ENCODE measurements at regions of chr10 and their contacts with region 1.

Region 1: DNA sequence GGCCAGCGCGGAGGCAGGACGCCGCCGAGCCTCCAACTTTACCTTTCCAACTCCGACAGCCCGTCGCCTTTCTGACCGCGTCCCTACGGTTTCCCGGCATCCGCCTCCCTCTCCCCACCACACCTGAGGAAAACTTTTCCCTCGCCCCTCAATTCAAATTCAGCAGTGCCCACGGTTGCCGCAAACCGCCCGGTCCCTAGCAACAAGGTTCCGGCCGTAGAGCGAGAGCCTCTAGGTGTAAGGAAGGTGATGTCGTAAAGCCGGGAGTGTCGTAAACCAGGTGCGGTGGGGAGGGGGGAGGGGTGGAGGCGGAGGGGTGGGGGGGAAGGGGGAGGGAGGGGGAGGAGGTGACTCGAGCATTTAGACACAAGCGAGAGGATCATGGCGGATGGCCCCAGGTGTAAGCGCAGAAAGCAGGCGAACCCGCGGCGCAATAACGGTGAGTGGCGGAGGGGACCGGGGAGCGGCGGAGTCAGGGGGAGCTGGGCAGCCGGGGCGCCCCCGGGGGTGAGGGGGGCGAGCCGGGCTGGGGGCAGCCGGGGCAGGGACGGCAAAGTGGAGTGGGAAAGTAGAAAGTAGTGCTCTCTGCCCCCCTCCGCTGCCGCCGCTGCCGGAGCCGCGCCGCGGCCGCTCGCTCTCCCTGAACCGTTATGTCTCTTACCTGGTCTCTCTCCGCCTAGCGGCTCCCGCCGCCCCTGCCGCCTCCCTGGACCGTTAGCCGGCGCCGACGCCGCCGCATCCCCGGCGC is at the start of gene ZEB1:
- DNase-seq: peak; percentile 79
- H3K4me3 ChIP-seq: peak within 1 kb of the TSS; percentile 88 to 96 (median 94)
- H3K27ac ChIP-seq: peak within 1 kb of the TSS; percentile 96
- H3K4me1 ChIP-seq: peaks cover 64% of the 10 kb centered on the region
- H3K27me3 ChIP-seq: no peaks in the 10 kb centered on the region
- CTCF ChIP-seq: peak; percentile 19 to 55
- POLR2A ChIP-seq: no peak
- total RNA-seq, gene ZEB1: 117 and 130 TPM in 2 replicates

Region 2: GRCh38 chr10:30751678-30752331 is 567.2 kb before region 1 on chr10:
- CTCF ChIA-PET with region 1: interaction called, 13 read pairs
- POLR2A ChIA-PET with region 1: no interaction called
- dilution Hi-C with region 1: no loop called
- intact Hi-C with region 1: no loop called
- DNase-seq: peak; percentile 76
- H3K4me3 ChIP-seq: no peak overlapping the region
- H3K27ac ChIP-seq: no peak overlapping the region
- H3K4me1 ChIP-seq: peaks cover 5% of the 10 kb centered on the region
- H3K27me3 ChIP-seq: no peaks in the 10 kb centered on the region
- CTCF ChIP-seq: peak; percentile 90 to 98
- POLR2A ChIP-seq: no peak

Region 3: DNA sequence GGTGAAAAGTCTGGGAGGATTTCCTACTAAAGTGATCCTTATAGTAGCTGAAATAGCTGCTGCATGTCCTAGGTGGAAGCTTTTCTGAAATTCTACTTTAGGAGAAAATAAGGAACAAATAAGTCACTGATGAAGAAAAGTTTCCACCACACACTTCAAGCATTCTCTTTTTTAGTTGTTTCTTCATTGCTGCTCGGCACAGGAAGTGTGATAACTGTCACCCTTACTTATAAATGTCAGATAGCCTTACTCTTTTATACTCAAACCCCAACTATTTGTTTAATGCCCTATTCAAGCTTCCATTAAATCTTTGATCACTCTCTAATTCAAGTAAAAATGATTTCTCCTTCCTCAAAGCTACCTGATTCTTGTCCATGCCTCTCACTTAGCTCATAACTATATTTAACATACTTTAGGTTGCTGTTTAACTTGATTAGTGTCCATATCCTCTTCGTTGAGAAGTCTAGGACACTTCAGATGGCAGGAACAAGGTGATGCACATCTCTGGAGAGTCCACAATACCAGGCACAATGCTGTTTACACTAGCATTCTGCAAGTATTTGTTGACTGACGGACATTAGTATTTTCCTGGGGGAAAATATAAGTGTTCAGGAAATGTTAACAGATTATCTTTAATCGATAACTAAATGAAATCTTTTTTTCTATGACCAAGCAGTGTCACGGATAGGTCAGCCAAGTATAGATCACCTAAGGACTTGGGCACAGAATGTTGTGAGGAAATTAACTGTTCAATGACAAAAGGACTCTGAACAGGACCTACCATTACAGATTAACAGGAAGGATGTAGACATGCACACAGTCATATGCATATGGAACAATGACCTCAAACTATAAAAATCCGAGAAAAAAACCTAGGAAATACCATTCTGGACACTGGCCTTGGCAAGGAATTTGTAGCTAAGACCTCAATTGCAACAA is 354.8 kb before region 1 on chr10:
- CTCF ChIA-PET with region 1: no interaction called
- POLR2A ChIA-PET with region 1: no interaction called
- dilution Hi-C with region 1: no loop called
- intact Hi-C with region 1: loop called (anchors 5 kb)
- DNase-seq: peak; percentile 81
- H3K4me3 ChIP-seq: peak overlapping the region in 1 of 3 experiments; percentile 30
- H3K27ac ChIP-seq: peak overlapping the region; percentile 99
- H3K4me1 ChIP-seq: peaks cover 45% of the 10 kb centered on the region
- H3K27me3 ChIP-seq: no peaks in the 10 kb centered on the region
- CTCF ChIP-seq: no peak
- POLR2A ChIP-seq: peak; percentile 32

Region 4: DNA sequence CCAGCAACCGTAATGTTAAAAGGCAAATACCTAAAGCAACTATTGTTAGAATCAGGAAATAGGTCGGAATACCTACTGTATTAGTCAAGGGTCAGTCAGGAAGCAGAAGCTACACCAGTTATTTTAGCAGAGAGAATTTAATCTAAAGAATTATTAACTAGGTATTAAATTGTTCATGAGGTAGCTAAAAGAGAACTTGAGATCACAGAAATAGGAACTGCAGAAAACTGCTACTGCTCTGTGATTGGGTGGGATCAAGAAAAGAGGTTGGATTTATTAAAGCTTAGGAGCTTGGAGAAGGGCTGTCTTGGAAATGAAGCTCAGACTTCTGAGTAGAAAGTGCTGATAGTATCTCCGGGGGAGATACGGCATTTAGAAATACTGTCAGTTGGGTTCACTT is 267.3 kb before region 1 on chr10:
- CTCF ChIA-PET with region 1: no interaction called
- POLR2A ChIA-PET with region 1: no interaction called
- dilution Hi-C with region 1: no loop called
- intact Hi-C with region 1: loop called (anchors 5 kb)
- DNase-seq: peak; percentile 69
- H3K4me3 ChIP-seq: peak overlapping the region in 1 of 3 experiments; percentile 53
- H3K27ac ChIP-seq: peak overlapping the region; percentile 99
- H3K4me1 ChIP-seq: peaks cover 32% of the 10 kb centered on the region
- H3K27me3 ChIP-seq: no peaks in the 10 kb centered on the region
- CTCF ChIP-seq: no peak
- POLR2A ChIP-seq: no peak

Region 5: DNA sequence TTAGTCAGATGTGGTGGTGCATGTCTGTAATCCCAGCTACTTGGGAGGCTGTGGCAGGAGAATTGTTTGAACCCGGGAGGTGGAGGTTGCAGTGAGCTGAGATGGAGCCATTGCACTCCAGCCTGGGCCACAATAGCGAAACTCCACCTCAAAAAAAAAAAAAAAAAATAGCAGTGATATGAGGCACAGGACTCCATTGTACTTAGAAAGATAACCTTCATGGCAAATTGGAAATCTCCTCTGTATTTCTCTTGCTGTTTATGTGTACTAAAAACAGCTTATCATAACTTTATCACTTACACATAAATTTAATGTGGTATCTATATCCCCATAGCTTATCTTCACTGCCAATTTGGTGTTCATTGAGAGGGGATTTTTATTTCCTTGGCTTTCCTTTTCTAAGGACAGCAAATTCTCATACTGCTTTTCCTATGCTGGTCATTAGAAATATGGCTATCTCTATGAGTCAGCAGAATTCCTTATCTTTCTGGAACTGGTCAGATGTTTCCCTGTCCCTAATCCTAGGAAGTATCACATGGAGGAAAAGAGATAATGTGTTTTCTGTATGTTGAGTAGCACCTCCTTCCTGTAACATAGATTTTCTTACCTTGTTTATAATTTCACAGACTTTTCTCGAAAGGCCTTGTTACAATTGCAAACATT is 40.6 kb before region 1 on chr10:
- CTCF ChIA-PET with region 1: no interaction called
- POLR2A ChIA-PET with region 1: interaction called, 3 read pairs
- dilution Hi-C with region 1: no loop called
- intact Hi-C with region 1: loop called (anchors 2 kb)
- DNase-seq: peak; percentile 95
- H3K4me3 ChIP-seq: no peak overlapping the region
- H3K27ac ChIP-seq: peak overlapping the region; percentile 78
- H3K4me1 ChIP-seq: peaks cover 13% of the 10 kb centered on the region
- H3K27me3 ChIP-seq: no peaks in the 10 kb centered on the region
- CTCF ChIP-seq: no peak
- POLR2A ChIP-seq: no peak

Region 6: GRCh38 chr10:31340343-31340742 is 21.3 kb after region 1 on chr10:
- CTCF ChIA-PET with region 1: no interaction called
- POLR2A ChIA-PET with region 1: no interaction called
- dilution Hi-C with region 1: no loop called
- intact Hi-C with region 1: no loop called
- DNase-seq: no peak
- H3K4me3 ChIP-seq: no peak overlapping the region
- H3K27ac ChIP-seq: no peak overlapping the region
- H3K4me1 ChIP-seq: no peaks in the 10 kb centered on the region
- H3K27me3 ChIP-seq: no peaks in the 10 kb centered on the region
- CTCF ChIP-seq: no peak
- POLR2A ChIP-seq: no peak

Region 7: DNA sequence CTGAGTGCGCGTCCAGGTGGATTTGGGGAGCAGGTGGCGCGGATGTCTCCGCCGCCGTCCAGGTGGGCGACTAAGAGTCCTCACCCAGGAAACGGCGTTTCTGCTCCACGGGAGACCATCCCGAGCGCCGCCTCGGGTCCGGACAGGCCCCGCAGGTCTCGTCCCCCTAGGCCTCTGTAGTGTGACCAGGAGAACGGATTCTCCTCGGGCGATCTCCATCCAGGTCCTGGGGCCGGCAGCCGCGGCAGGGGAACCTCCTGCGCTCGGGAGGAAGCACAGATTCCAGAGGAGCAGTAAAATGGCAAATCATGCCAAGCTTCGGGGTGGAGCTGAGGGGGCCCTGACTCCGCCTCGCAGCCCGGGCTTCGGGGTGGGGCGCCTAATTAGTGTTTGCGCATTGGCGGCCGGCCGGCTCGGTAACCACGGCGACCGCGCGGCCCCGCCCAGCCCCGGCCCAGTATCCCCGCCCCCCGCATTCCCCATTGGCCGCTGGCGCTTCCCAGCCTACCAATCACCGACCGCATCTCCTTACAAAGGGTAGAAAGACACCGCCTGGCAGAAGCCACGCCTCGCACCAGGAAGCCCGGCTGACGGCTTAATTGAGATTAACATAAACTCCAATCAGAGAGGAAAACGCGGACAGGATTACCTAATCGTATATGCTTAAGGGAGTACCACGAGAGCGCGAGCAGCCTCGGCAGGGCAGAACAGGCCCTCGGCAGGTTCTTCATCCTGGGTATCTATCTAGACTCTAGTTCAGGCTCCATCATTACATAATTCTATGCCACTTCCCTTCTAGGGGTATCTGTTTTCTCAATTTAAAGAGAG is 441.0 kb after region 1 on chr10:
- CTCF ChIA-PET with region 1: no interaction called
- POLR2A ChIA-PET with region 1: no interaction called
- dilution Hi-C with region 1: no loop called
- intact Hi-C with region 1: loop called (anchors 10 kb)
- DNase-seq: peak; percentile 99
- H3K4me3 ChIP-seq: peak overlapping the region; percentile 57 to 77 (median 76)
- H3K27ac ChIP-seq: peak overlapping the region; percentile 94
- H3K4me1 ChIP-seq: peaks cover 11% of the 10 kb centered on the region
- H3K27me3 ChIP-seq: no peaks in the 10 kb centered on the region
- CTCF ChIP-seq: no peak
- POLR2A ChIP-seq: peak; percentile 83

Measured in endothelial cell of umbilical vein (primary cell).